ENCODE measurements at regions of chr10 and their contacts with region 1.

Region 1: DNA sequence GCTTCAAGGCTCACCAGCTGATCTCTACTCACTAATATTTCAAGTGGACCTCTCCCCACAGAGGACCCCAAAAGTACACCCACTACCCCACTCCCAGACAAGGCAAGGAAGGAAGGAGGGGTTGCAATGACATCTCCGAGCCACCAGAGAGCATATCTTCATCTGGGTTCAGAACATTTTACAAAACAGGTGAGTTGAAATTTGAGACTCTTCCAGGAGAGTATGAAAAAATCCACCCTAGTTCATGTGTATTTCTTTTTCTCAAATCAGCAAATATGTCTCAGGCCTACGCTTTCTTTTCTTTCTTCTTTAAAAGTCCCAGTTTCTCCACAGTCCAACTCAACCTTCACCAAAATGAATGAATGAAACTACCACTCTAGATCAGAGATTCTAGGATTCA is 61.9 kb downstream of the SGMS1 start:
- DNase-seq: peak; percentile 56
- H3K4me3 Mint-ChIP-seq: no peak overlapping the region
- H3K27ac Mint-ChIP-seq: no peak overlapping the region
- H3K4me1 Mint-ChIP-seq: peaks cover 18% of the 10 kb centered on the region
- H3K27me3 Mint-ChIP-seq: no peaks in the 10 kb centered on the region
- CTCF ChIP-seq: peak; percentile 78

Region 2: GRCh38 chr10:50275650-50276235 is 286.1 kb before region 1 on chr10:
- CTCF ChIA-PET with region 1: no interaction called
- POLR2A ChIA-PET with region 1: no interaction called
- intact Hi-C with region 1: no loop called
- DNase-seq: peak; percentile 52
- H3K4me3 Mint-ChIP-seq: no peak overlapping the region
- H3K27ac Mint-ChIP-seq: no peak overlapping the region
- H3K4me1 Mint-ChIP-seq: no peaks in the 10 kb centered on the region
- H3K27me3 Mint-ChIP-seq: peaks cover 23% of the 10 kb centered on the region
- CTCF ChIP-seq: peak; percentile 28

Region 3: DNA sequence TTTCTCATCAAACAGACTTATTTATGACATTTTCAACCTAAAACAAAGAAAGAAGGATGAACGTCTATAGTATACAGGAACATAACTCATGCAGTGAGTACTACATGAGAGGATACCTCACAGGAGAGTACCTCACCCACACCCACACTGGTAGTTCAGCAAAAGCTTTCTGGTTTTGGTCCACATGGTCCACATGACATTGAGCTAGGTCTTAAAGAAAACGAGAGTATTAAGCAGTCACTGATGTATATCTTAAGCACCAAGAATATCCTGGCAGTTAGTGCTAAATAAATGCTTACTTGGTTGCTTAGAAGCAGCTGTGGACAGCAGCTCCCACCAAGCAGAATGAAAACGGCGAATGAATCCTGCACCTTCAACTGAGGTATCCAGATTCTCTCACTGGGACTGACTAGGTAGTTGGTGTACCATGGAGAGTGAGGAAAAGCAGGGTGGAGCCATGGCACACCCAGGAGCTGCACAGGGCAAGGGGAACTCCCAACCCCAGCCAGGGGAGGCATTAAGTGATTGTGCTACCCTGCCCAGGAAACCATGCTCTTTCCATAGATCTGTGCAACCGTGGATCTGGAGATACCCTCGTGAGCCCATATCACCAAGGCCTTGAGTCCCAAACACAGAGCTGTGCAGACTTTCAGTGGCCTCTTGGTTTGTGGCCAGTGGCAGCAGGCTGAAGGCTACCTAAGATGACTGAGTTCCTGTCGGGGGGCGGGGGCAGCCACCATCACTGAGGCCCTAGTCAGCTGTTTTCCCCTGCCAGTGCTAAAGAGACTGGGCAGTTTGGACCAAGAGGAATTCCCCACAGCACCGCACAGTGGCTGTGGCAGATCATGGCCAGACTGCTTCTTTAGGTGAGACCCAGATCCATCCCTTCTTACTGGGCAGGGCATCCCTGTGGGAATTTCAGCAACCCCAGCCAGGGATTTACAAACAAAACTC is 81.5 kb before region 1 on chr10:
- CTCF ChIA-PET with region 1: no interaction called
- POLR2A ChIA-PET with region 1: no interaction called
- intact Hi-C with region 1: no loop called
- DNase-seq: no peak
- H3K4me3 Mint-ChIP-seq: no peak overlapping the region
- H3K27ac Mint-ChIP-seq: no peak overlapping the region
- H3K4me1 Mint-ChIP-seq: no peaks in the 10 kb centered on the region
- H3K27me3 Mint-ChIP-seq: no peaks in the 10 kb centered on the region
- CTCF ChIP-seq: no peak

Region 4: GRCh38 chr10:50577681-50578350 is 16.0 kb after region 1 on chr10:
- CTCF ChIA-PET with region 1: interaction called, 11 read pairs
- POLR2A ChIA-PET with region 1: interaction called, 3 read pairs
- intact Hi-C with region 1: no loop called
- DNase-seq: no peak
- H3K4me3 Mint-ChIP-seq: no peak overlapping the region
- H3K27ac Mint-ChIP-seq: no peak overlapping the region
- H3K4me1 Mint-ChIP-seq: peaks cover 23% of the 10 kb centered on the region
- H3K27me3 Mint-ChIP-seq: no peaks in the 10 kb centered on the region
- CTCF ChIP-seq: no peak

Region 5: GRCh38 chr10:50605269-50606263 is 43.8 kb after region 1 on chr10:
- CTCF ChIA-PET with region 1: interaction called, 4 read pairs
- POLR2A ChIA-PET with region 1: interaction called, 5 read pairs
- intact Hi-C with region 1: loop called (anchors 1 kb)
- DNase-seq: peak; percentile 95
- H3K4me3 Mint-ChIP-seq: peak overlapping the region; percentile 61
- H3K27ac Mint-ChIP-seq: peak overlapping the region; percentile 88
- H3K4me1 Mint-ChIP-seq: peaks cover 46% of the 10 kb centered on the region
- H3K27me3 Mint-ChIP-seq: no peaks in the 10 kb centered on the region
- CTCF ChIP-seq: no peak

Region 6: DNA sequence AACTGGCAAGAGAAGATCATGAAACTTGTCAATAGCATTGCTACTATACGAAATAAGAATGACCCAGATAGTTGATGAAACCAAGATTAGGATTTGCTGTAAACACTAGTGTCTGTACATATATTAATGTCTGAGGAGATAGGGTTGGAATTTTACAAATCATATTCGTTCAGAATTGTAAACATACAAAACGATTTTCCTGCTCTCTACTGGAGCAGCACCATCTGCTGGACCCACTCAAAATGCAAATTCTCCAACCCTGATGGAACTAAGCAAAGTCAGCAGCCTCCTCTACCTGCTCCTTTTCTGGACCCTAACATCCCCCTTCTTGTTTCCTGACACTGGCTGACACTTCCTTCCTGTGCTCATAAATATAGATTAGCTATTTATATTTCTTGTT is 91.3 kb after region 1 on chr10:
- CTCF ChIA-PET with region 1: interaction called, 9 read pairs
- POLR2A ChIA-PET with region 1: no interaction called
- intact Hi-C with region 1: loop called (anchors 1 kb)
- DNase-seq: peak; percentile 31
- H3K4me3 Mint-ChIP-seq: no peak overlapping the region
- H3K27ac Mint-ChIP-seq: no peak overlapping the region
- H3K4me1 Mint-ChIP-seq: peaks cover 10% of the 10 kb centered on the region
- H3K27me3 Mint-ChIP-seq: no peaks in the 10 kb centered on the region
- CTCF ChIP-seq: peak; percentile 47

Region 7: GRCh38 chr10:50807851-50808776 is 246.3 kb after region 1 on chr10:
- CTCF ChIA-PET with region 1: no interaction called
- POLR2A ChIA-PET with region 1: no interaction called
- intact Hi-C with region 1: no loop called
- DNase-seq: no peak
- H3K4me3 Mint-ChIP-seq: no peak overlapping the region
- H3K27ac Mint-ChIP-seq: no peak overlapping the region
- H3K4me1 Mint-ChIP-seq: no peaks in the 10 kb centered on the region
- H3K27me3 Mint-ChIP-seq: peaks cover 28% of the 10 kb centered on the region
- CTCF ChIP-seq: no peak

Region 8: DNA sequence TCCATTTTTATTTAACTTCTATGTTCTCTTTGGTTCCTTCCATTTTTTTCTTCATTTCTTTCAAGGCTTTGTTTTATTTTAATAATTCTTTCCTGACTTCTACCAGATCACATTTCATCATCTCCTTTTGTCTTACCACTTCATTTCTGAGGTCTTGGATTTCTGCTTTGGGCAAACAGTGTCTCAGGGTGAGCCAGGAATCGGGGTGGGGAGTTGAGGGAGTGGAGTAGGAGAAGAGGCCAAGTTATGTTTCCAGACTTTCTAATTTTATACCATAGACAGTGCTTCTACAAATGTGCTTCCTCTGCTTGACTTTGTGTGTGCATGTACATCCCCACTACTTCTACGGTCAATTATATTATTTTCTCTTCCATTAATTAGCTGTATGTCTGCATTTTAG is 624.5 kb after region 1 on chr10:
- CTCF ChIA-PET with region 1: no interaction called
- POLR2A ChIA-PET with region 1: no interaction called
- intact Hi-C with region 1: no loop called
- DNase-seq: no peak
- H3K4me3 Mint-ChIP-seq: no peak overlapping the region
- H3K27ac Mint-ChIP-seq: no peak overlapping the region
- H3K4me1 Mint-ChIP-seq: no peaks in the 10 kb centered on the region
- H3K27me3 Mint-ChIP-seq: no peaks in the 10 kb centered on the region
- CTCF ChIP-seq: no peak